ENCODE measurements at regions of chr1 and their contacts with region 1.

Region 1: DNA sequence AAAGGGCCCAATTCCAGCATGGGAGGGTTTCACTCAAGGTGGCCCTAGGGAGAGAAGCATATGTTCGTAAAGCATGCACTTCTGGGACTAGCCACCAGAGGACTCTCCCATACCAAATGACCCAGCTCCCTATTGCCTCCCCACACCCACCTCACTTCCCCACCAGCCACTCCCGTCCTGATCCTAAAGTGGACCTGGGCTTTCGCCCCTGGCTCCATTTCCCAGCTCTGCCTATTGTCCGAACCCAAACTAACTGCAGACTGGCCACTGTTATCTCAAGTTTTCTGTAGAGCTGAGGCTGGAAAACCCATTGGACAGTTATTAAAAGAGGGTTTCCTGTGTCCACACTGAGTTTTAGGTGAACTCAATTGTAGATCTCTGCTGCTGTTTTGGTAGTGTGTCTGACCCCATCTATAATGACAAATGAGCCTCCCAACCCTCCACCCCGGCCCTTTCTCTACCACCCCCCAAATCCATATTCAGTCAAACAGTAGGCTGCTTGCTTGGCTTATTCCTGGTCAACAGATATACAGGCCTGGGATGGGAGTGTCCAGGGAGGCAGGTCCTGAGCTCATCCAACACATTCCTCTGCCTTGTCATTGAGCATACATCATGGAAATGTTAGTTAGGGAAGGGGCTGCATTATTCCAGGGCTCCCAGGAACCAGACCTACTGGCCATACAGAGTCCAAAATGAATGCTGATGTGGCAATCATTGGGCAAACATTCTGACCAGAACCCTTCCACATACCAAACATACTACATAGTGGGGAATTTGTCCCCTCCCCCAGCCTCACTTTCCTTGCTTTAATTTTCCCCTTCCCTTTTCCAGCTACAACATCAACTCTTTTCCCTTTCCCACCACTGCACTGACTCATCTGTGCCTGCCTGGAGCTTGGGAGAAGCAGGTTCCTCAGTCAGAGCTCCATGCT is 59.2 kb downstream of the ABCA4 start:
- DNase-seq: peak; percentile 80
- ATAC-seq: peak; percentile 95
- H3K4me3 ChIP-seq: no peak overlapping the region
- H3K27ac ChIP-seq: peak overlapping the region; percentile 18; the same call in 1 of the 2 replicates
- H3K4me1 ChIP-seq: peaks cover 19% of the 10 kb centered on the region
- H3K27me3 ChIP-seq: no peaks in the 10 kb centered on the region
- CTCF ChIP-seq: peak; percentile 95
- POLR2A ChIP-seq: peak; percentile 49; the same call in 1 of the 2 replicates
- RAD21 ChIP-seq: peak; percentile 95

Region 2: GRCh38 chr1:94039514-94039870 is 22.3 kb before region 1 on chr1:
- CTCF ChIA-PET with region 1: interaction called, 14 read pairs
- POLR2A ChIA-PET with region 1: no interaction called
- dilution Hi-C with region 1: no loop called
- in situ Hi-C with region 1: no loop called
- intact Hi-C with region 1: no loop called
- DNase-seq: peak; percentile 62
- ATAC-seq: peak; percentile 22; the same call in 1 of the 2 replicates
- H3K4me3 ChIP-seq: no peak overlapping the region
- H3K27ac ChIP-seq: no peak overlapping the region
- H3K4me1 ChIP-seq: peaks cover 28% of the 10 kb centered on the region
- H3K27me3 ChIP-seq: no peaks in the 10 kb centered on the region
- CTCF ChIP-seq: peak; percentile 71
- POLR2A ChIP-seq: no peak
- RAD21 ChIP-seq: peak; percentile 59

Region 3: DNA sequence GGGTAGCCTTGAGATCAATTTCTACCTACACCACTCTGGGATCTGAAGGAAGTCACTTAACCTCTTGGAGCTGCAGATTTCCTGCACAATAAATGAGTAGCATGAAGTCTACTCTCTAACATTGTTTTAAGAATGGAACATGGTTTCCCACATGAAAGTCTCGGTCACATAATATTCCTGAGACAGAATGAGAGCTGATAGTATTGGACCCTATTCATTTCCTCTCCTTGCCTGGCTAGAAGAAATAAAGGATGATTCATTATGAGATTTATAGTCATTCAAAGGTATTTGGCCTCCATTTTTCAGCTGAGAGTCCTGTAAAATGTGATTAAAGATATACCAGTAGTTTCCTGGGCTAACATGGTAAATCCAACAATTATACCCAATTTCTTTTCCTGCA is 118.9 kb after region 1 on chr1:
- CTCF ChIA-PET with region 1: interaction called, 8 read pairs
- POLR2A ChIA-PET with region 1: no interaction called
- dilution Hi-C with region 1: no loop called
- in situ Hi-C with region 1: no loop called
- intact Hi-C with region 1: loop called (anchors 5 kb)
- DNase-seq: peak; percentile 16
- ATAC-seq: no peak
- H3K4me3 ChIP-seq: no peak overlapping the region
- H3K27ac ChIP-seq: no peak overlapping the region
- H3K4me1 ChIP-seq: no peaks in the 10 kb centered on the region
- H3K27me3 ChIP-seq: no peaks in the 10 kb centered on the region
- CTCF ChIP-seq: no peak
- POLR2A ChIP-seq: no peak
- RAD21 ChIP-seq: no peak

Region 4: GRCh38 chr1:94247138-94248094 is 185.6 kb after region 1 on chr1:
- CTCF ChIA-PET with region 1: interaction called, 3 read pairs
- POLR2A ChIA-PET with region 1: no interaction called
- dilution Hi-C with region 1: no loop called
- in situ Hi-C with region 1: loop called (anchors 10 kb)
- intact Hi-C with region 1: no loop called
- DNase-seq: peak; percentile 36
- ATAC-seq: peak; percentile 94
- H3K4me3 ChIP-seq: peak overlapping the region; percentile 83
- H3K27ac ChIP-seq: peak overlapping the region; percentile 17; the same call in 1 of the 2 replicates
- H3K4me1 ChIP-seq: no peaks in the 10 kb centered on the region
- H3K27me3 ChIP-seq: no peaks in the 10 kb centered on the region
- CTCF ChIP-seq: no peak
- POLR2A ChIP-seq: no peak
- RAD21 ChIP-seq: 0 out of 2 replicates have a peak, but pooled peaks have one; percentile 1

Region 5: DNA sequence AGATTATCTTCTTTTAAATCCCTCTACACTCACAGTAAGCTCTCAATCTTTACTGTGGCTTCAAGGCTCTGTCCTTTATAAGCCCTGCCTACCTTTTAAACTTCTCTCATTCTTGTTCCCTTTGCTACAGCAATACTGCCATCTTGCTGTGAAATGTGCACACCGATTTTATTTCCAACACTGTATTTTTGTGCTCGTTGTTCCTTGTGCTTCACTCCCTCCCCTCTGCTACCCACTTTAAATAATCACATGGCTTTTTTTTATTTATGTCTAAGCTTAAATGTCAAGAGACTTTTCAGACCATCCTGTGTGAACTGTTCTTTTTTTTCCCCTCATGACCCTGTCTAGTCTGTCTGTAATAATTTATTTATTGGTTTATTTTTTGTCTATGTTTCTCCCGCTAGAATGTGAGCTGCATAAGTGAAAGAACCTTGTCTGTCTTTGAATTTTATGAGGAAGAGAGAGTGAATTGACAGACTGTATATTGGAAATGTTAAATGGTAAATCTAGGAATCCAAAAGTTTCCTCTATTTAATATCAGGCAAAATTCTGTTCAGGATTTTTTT is 402.1 kb after region 1 on chr1:
- CTCF ChIA-PET with region 1: no interaction called
- POLR2A ChIA-PET with region 1: no interaction called
- dilution Hi-C with region 1: no loop called
- in situ Hi-C with region 1: no loop called
- intact Hi-C with region 1: loop called (anchors 10 kb)
- DNase-seq: peak; percentile 71
- ATAC-seq: peak; percentile 86
- H3K4me3 ChIP-seq: no peak overlapping the region
- H3K27ac ChIP-seq: no peak overlapping the region
- H3K4me1 ChIP-seq: no peaks in the 10 kb centered on the region; the same call in 1 of the 2 replicates
- H3K27me3 ChIP-seq: no peaks in the 10 kb centered on the region
- CTCF ChIP-seq: peak; percentile 74
- POLR2A ChIP-seq: no peak
- RAD21 ChIP-seq: peak; percentile 85